ENCODE measurements at regions of chr5 and their contacts with region 1.

Region 1: GRCh38 chr5:135457424-135458071 is 5.4 kb upstream of the TIFAB start:
- DNase-seq: peak; percentile 73
- ATAC-seq: peak; percentile 68
- H3K4me3 Mint-ChIP-seq: no peak overlapping the region
- H3K27ac Mint-ChIP-seq: no peak overlapping the region
- H3K4me1 Mint-ChIP-seq: no peaks in the 10 kb centered on the region
- H3K27me3 Mint-ChIP-seq: peaks cover 41% of the 10 kb centered on the region

Region 2: GRCh38 chr5:135319928-135320607 is 137.5 kb before region 1 on chr5:
- CTCF ChIA-PET with region 1: no interaction called
- DNase-seq: no peak
- ATAC-seq: no peak
- H3K4me3 Mint-ChIP-seq: no peak overlapping the region
- H3K27ac Mint-ChIP-seq: no peak overlapping the region
- H3K4me1 Mint-ChIP-seq: peaks cover 4% of the 10 kb centered on the region
- H3K27me3 Mint-ChIP-seq: no peaks in the 10 kb centered on the region

Region 3: DNA sequence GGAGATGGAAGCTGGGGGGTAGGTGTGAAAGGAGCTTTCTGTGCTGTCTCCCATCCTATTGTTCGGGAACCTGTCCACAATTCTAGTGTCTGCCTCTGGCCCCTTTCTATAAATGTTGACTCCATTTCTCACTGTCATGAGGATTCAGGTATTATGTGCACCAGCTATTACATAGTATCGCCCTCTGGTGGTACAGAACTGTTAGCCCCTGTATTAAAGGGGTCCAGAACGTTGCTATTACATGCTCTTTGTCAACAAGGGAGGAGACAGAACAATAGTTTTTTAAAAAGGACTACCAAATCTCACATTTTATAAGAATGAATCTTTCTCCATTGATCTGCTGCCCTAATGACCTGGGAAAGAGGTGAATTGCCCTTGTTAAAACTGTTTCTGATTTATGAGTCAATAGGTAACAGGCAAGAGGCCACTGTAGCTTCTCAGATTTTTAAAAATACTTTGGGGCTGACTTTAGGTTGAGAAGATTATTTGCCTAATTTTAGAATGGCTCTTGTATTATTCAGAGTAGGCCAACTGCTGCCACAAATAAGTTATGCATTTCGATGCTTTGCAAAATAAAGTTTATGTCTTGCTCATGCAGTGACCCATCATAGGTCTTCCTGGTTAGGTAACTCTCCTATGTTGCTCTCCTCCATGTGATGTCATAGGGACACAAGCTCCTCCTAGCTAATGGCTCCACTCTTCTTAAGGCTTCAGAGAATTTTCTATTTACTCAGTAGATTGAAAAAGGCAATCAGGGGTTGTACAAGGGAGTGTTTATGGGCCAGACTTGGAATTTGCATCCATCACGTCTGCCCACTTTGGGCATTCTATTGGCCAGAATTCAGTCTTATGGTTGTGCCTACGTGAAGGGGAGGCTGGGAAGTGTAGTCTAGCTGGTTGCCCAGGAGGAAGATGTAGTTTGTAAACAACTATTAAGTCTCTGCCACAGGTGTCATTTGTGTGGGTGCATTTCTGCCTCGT is 31.2 kb before region 1 on chr5:
- CTCF ChIA-PET with region 1: interaction called, 24 read pairs
- DNase-seq: no peak
- ATAC-seq: peak; percentile 98
- H3K4me3 Mint-ChIP-seq: no peak overlapping the region
- H3K27ac Mint-ChIP-seq: peak overlapping the region; percentile 55
- H3K4me1 Mint-ChIP-seq: peaks cover 13% of the 10 kb centered on the region
- H3K27me3 Mint-ChIP-seq: peaks cover 33% of the 10 kb centered on the region

Region 4: DNA sequence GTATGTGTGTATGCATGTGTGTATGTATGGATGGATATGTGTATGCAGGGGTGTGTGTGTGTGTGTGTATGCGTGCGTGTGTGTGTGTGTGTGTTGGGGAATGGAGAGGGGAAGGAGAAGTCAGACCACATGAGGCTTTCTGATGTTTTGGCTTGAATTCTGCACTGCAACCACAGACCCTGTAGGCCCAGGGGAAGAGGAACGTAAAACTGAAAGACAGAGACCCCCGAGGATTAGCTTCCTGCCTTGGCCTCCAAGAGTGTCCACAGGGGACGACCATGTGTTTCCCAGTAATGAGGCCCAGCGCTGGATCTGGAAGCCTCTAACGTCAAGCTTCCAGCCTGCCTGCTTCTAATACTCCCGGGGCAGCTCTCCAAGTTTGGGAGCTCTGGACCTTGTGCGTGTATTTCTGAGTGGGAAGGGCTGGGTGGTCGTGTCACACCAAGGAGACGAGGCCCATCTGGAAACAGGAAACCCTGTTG is 16.2 kb before region 1 on chr5:
- CTCF ChIA-PET with region 1: interaction called, 16 read pairs
- DNase-seq: peak; percentile 28
- ATAC-seq: no peak
- H3K4me3 Mint-ChIP-seq: no peak overlapping the region
- H3K27ac Mint-ChIP-seq: no peak overlapping the region
- H3K4me1 Mint-ChIP-seq: no peaks in the 10 kb centered on the region
- H3K27me3 Mint-ChIP-seq: peaks cover under 1% of the 10 kb centered on the region

Region 5: GRCh38 chr5:135560858-135561257 is 103.3 kb after region 1 on chr5:
- CTCF ChIA-PET with region 1: interaction called, 350 read pairs
- DNase-seq: peak; percentile 79
- ATAC-seq: peak; percentile 73
- H3K4me3 Mint-ChIP-seq: no peak overlapping the region
- H3K27ac Mint-ChIP-seq: no peak overlapping the region
- H3K4me1 Mint-ChIP-seq: peaks cover 4% of the 10 kb centered on the region
- H3K27me3 Mint-ChIP-seq: peaks cover 41% of the 10 kb centered on the region